H1 (cell line): ENCODE measurements at regions of chr1 and their contacts with region 1.

Region 1: DNA sequence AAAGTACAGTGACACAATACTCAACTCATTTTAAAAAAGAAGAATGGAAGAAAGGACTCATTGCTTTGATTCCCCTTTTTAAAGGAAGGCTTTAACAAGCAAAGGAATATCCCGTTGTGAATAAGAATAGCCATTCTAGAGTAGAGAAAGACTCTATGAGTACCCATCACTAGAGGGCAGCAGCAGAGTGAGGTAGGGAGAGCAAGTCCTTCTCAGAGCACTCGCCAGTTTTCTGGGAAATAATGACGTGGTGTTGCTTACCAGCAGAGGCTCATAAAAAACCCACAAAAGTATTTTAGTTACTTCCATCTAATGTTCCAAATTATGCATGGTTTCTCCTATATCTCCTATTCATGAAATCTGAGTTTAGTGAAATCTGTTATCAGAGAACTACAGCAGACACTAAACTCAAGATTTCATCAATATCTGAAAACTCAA is 74.6 kb downstream of the USP24 start:
- DNase-seq: peak in 1 of 2 experiments; percentile 52
- H3K4me3 ChIP-seq: no peak overlapping the region
- H3K27ac ChIP-seq: no peak overlapping the region
- H3K4me1 ChIP-seq: no peaks in the 10 kb centered on the region
- H3K27me3 ChIP-seq: no peaks in the 10 kb centered on the region
- CTCF ChIP-seq: peak; percentile 35 to 75 (median 74)
- EP300 ChIP-seq: no peak
- POLR2A ChIP-seq: no peak
- RAD21 ChIP-seq: peak; percentile 80 to 84

Region 2: GRCh38 chr1:54516249-54516920 is 624.2 kb before region 1 on chr1:
- CTCF ChIA-PET with region 1: no interaction called
- POLR2A ChIA-PET with region 1: no interaction called
- DNase-seq: no peak
- H3K4me3 ChIP-seq: no peak overlapping the region
- H3K27ac ChIP-seq: no peak overlapping the region
- H3K4me1 ChIP-seq: no peaks in the 10 kb centered on the region
- H3K27me3 ChIP-seq: no peaks in the 10 kb centered on the region
- CTCF ChIP-seq: no peak
- EP300 ChIP-seq: no peak
- POLR2A ChIP-seq: no peak
- RAD21 ChIP-seq: no peak

Region 3: DNA sequence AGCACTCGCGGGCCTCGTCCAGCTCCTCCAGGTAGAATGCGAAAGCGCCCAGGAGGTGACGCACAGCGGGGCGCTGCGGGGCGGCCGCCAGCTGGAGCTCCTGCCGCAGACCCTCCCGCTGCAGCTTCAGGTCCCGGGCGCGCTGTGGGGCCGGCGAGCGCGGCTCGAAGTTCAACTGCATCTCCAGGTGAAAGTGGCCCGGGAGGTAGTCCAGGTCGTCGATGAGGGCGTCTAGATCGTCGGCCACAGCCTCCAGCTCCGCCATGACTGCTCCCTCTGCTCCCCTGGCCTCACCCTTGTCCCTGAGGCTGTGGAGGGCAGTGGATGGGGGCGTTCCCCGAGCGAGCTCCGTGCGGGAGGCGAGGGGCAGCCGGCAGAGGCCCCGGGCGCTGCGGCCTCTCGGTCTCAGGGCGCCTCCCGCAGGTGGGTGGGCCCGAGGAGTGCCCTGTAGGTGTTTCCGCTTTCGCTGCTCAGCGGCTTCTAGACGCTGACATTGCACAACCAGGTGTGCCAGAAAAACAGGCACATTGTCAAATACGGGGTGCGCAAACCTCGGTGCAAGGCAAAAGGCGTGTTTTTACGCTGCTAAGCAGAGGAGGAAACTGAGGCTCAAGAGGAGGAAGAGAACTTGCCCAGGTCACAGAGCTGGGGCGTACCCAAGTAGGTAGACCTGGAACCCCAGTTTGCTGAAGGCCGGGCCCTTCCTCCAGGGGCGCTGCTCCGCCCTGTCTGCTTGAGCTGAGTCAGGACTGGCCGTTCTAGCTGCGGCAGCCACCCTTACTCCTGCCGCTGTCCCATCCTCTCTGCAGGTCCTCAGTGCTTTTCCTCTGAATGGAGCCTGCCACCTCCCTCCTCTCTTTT is 339.4 kb before region 1 on chr1 and contains the start of gene TTC22:
- CTCF ChIA-PET with region 1: no interaction called
- POLR2A ChIA-PET with region 1: no interaction called
- DNase-seq: peak in 1 of 2 experiments; percentile 73
- H3K4me3 ChIP-seq: peak within 1 kb of the TSS; percentile 19 to 51 (median 22); a peak in 7 of 8 replicates
- H3K27ac ChIP-seq: no peak within 1 kb of the TSS
- H3K4me1 ChIP-seq: peaks cover 0 to 8% (median under 1%) of the 10 kb centered on the region in 4 experiments; a peak in 3 of 7 replicates
- H3K27me3 ChIP-seq: peaks cover 5 to 23% (median 16%) of the 10 kb centered on the region in 4 experiments; a peak in 6 of 7 replicates
- CTCF ChIP-seq: peak; percentile 32 to 72 (median 51); a peak in 3 of 4 replicates
- EP300 ChIP-seq: no peak
- POLR2A ChIP-seq: no peak
- RAD21 ChIP-seq: peak; percentile 56 to 67
- total RNA-seq, gene TTC22: 1.1 and 1.6 TPM in 2 replicates

Region 4: GRCh38 chr1:55103891-55104290 is 36.7 kb before region 1 on chr1:
- CTCF ChIA-PET with region 1: no interaction called
- POLR2A ChIA-PET with region 1: no interaction called
- DNase-seq: no peak
- H3K4me3 ChIP-seq: no peak overlapping the region
- H3K27ac ChIP-seq: no peak overlapping the region
- H3K4me1 ChIP-seq: no peaks in the 10 kb centered on the region
- H3K27me3 ChIP-seq: no peaks in the 10 kb centered on the region
- CTCF ChIP-seq: no peak
- EP300 ChIP-seq: no peak
- POLR2A ChIP-seq: no peak
- RAD21 ChIP-seq: no peak

Region 5: GRCh38 chr1:55155514-55155913 is 14.9 kb after region 1 on chr1:
- CTCF ChIA-PET with region 1: interaction called, 34 read pairs
- POLR2A ChIA-PET with region 1: no interaction called
- DNase-seq: no peak
- H3K4me3 ChIP-seq: no peak overlapping the region
- H3K27ac ChIP-seq: no peak overlapping the region
- H3K4me1 ChIP-seq: no peaks in the 10 kb centered on the region
- H3K27me3 ChIP-seq: no peaks in the 10 kb centered on the region
- CTCF ChIP-seq: no peak
- EP300 ChIP-seq: no peak
- POLR2A ChIP-seq: no peak
- RAD21 ChIP-seq: no peak

Region 6: DNA sequence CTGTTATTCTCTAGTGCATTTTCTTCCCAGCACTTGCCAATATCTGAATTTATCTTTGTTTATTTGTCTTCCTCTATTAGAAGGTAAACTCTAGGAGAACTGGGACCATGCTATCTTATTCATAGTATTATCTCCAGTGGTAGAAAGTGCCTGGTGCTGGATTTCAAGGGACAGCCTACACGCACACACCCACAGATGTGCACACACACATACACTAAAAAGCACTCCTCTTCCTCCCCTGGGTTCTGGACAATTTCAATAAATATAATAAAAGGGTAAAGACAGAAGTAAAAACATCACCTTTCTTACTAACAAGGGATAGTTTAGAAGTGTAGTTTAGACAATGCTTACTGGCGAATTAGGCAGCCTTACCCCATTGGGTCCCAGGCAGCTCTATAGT is 103.1 kb after region 1 on chr1:
- CTCF ChIA-PET with region 1: interaction called, 14 read pairs
- POLR2A ChIA-PET with region 1: no interaction called
- DNase-seq: no peak
- H3K4me3 ChIP-seq: no peak overlapping the region
- H3K27ac ChIP-seq: no peak overlapping the region
- H3K4me1 ChIP-seq: no peaks in the 10 kb centered on the region
- H3K27me3 ChIP-seq: no peaks in the 10 kb centered on the region
- CTCF ChIP-seq: no peak
- EP300 ChIP-seq: no peak
- POLR2A ChIP-seq: no peak
- RAD21 ChIP-seq: no peak

Region 7: DNA sequence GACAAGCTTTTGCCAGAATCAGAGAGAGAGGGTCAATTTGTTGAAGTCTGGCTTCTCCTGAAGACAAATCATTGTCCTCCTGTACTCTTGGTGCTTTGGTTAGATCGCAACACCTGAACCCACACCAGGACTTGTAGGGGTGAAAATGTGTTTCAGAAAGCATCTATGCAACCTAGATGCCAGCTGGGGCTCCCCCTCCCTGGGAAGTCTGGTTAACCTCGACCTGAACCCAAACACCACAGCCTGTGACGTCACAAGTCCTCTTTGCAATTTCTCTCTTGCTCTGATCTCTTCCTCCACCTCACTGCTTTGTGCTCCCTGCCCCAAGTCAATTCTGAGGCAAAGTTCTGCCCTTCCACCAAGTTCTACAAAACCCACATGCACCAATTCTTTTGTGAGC is 117.4 kb after region 1 on chr1:
- CTCF ChIA-PET with region 1: interaction called, 10 read pairs
- POLR2A ChIA-PET with region 1: no interaction called
- DNase-seq: no peak
- H3K4me3 ChIP-seq: no peak overlapping the region
- H3K27ac ChIP-seq: no peak overlapping the region
- H3K4me1 ChIP-seq: no peaks in the 10 kb centered on the region
- H3K27me3 ChIP-seq: no peaks in the 10 kb centered on the region
- CTCF ChIP-seq: no peak
- EP300 ChIP-seq: no peak
- POLR2A ChIP-seq: no peak
- RAD21 ChIP-seq: no peak

Region 8: DNA sequence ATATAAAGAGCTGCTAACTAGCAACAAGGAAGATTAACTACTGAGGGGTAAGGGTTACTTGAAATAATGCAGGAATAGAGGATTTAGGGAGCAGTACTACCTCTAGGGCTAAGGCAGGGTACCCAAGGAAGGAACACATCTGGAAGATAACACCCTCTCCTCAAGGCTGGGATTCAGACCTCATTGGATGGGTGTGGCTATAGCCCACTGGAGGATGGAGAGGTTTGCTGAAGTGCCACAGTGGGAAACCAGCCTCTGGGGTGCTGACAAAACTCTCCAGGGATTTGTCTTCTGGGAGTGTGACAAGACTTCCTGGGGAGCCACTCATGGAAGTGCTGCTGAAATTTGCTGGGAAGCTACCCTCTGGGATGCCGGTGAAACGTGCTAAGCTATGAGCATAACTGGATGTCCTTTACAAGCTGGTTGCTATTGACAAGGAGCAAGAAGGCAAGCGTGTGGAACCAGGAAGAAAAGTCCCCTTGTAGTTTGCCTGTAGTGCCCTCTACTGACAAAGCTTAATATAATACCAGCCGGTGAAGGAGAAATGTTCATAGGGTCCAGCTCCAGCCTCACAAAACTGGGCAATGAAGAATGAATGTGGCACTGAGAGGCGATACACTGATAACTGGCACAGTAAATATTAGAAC is 197.4 kb after region 1 on chr1:
- CTCF ChIA-PET with region 1: interaction called, 10 read pairs
- POLR2A ChIA-PET with region 1: no interaction called
- DNase-seq: peak in 1 of 2 experiments; percentile 7
- H3K4me3 ChIP-seq: no peak overlapping the region
- H3K27ac ChIP-seq: no peak overlapping the region
- H3K4me1 ChIP-seq: no peaks in the 10 kb centered on the region; a peak in 1 of 7 replicates
- H3K27me3 ChIP-seq: no peaks in the 10 kb centered on the region
- CTCF ChIP-seq: peak in 2 of 3 experiments; percentile 68 to 78; a peak in 3 of 4 replicates
- EP300 ChIP-seq: no peak
- POLR2A ChIP-seq: no peak
- RAD21 ChIP-seq: peak; percentile 83 to 88